Calu3 (cell line): ENCODE measurements at regions of chr12 and their contacts with region 1.

Region 1: DNA sequence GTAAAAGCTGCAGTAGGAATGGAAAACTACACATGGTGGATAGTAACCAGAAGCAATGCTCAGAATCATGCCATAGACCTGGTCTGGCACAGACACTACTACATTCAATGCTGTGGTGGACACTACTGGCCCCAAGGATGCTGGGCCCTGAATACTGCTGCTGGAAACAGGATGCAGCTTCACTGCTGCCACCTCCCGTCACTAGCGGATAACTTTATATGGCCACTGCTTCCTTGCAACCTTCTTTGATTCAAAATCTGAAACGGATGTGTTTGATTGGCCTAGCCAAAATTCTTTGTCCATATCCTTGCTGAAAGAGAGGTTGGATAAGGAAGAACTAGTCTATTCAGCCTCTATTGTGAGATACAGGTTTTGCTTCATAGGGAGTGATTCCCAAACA is 30.7 kb downstream of the ADCY6 start:
- DNase-seq: no peak
- H3K4me3 Mint-ChIP-seq: no peak overlapping the region
- H3K27ac Mint-ChIP-seq: no peak overlapping the region
- H3K4me1 Mint-ChIP-seq: peaks cover 11% of the 10 kb centered on the region
- H3K27me3 Mint-ChIP-seq: no peaks in the 10 kb centered on the region
- CTCF ChIP-seq: no peak

Region 2: GRCh38 chr12:48788854-48789796 is 30.9 kb after region 1 on chr12 and contains the start of gene ADCY6:
- CTCF ChIA-PET with region 1: interaction called, 10 read pairs
- intact Hi-C with region 1: no loop called
- DNase-seq: peak; percentile 72
- H3K4me3 Mint-ChIP-seq: peak within 1 kb of the TSS; percentile 97
- H3K27ac Mint-ChIP-seq: peak within 1 kb of the TSS; percentile 67
- H3K4me1 Mint-ChIP-seq: peaks cover 13% of the 10 kb centered on the region
- H3K27me3 Mint-ChIP-seq: no peaks in the 10 kb centered on the region
- CTCF ChIP-seq: no peak
- total RNA-seq, gene ADCY6: 39.0 and 42.9 TPM in 2 replicates

Region 3: DNA sequence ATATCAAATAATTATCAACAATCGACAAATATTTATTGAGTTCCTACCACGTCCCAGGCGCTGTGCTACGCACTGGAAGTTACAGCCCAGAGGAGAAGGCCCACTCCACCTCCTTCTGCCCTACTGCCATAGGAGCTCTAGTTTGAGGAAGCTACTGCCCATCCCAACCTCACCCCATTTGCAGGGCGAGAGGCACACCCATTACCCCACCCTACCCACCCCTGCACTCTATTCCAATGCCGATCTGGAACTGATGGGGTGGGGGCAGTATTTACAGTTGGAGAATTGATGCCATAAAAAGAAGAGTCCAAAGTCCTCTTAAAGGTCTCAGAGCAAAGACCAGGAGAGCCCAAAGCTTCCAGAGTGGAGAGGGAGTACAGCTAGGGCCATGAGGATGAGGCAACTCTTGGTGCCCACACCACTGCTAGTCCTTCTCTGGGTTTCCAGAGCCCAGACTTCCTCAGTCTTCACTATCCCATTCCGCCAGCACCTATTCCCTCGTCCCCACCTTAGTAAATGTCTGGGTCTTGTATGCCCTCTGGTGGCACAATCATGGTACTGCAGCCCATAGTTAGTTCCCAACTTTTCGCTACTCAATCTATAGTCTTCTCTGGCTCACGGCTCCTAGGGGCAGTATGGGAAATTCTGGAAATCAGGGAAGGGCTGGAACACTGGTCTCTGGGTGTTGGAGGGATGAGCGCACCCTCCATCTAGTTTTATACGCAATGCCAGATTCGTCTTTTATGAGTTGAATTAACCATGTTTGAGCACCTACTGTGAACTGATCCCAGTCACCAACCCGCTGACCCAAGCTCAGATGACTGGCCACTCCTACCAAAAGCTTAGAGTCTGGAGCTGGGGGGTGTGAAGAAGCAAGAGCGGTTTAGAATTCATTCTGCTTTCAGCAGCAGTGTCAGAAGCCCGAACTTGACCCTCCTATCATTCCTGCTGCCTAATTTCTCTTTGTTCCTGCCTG is 37.5 kb after region 1 on chr12:
- CTCF ChIA-PET with region 1: interaction called, 44 read pairs
- intact Hi-C with region 1: loop called (anchors 1 kb)
- DNase-seq: peak; percentile 60
- H3K4me3 Mint-ChIP-seq: no peak overlapping the region
- H3K27ac Mint-ChIP-seq: no peak overlapping the region
- H3K4me1 Mint-ChIP-seq: peaks cover 15% of the 10 kb centered on the region
- H3K27me3 Mint-ChIP-seq: no peaks in the 10 kb centered on the region
- CTCF ChIP-seq: peak; percentile 73